Activated CD4-positive, alpha-beta memory T cell treated with anti-CD3 and anti-CD28 coated beads for 36 hours (primary cell): ENCODE measurements at regions of chr18 and their contacts with region 1.

Region 1: DNA sequence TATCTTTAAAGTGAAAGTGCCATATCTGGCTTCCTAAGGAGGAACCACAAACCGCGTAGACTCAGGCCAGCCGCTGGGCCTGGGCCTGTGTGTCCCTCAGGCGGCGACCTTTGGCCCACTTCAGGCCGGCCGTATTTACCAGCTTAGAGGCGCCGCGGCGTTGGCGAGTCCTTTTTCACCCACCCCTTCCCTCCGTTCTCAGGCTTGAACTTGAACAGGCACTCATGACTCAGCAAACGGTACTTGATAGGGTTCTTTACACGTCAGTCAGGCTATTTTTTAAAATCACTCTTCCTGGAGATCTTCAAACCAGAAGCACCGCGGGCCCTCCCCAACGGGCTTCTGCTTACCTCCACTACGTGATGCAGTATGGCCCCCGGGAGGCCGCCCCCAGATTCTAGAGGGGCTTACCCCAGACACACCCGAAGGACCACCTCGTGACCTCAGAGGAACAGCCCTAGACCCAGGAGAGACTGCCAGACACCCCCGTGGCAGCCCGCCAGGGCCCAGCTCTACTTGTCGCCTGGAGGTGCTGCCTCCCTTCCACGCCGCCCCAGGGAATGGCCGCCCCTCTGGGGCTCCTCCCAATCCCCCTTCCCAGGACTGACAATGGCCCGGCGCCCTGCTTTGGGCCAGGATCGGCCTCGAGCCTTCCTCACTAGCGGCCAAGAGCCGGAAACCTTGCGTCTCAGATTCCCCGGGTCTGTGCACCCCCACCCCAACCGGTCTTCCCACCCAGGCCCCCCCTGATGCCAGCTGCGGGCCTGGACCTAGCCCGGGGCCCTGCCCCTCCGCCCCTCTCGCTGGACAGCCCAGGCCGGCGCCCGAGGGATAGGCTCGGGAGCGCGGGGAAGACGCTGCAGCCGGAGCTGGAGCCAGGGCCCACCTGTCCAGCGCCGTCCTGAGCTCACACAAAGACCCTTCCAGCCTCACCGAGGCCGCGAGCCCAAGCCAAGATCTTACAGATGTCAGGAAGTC is 33.8 kb upstream of the IMPA2 start:
- DNase-seq: peak; percentile 76
- H3K4me3 Mint-ChIP-seq: peak overlapping the region; percentile 67
- H3K27ac Mint-ChIP-seq: peak overlapping the region; percentile 58
- H3K4me1 Mint-ChIP-seq: peaks cover 8% of the 10 kb centered on the region
- H3K27me3 Mint-ChIP-seq: peaks cover 4% of the 10 kb centered on the region

Region 2: DNA sequence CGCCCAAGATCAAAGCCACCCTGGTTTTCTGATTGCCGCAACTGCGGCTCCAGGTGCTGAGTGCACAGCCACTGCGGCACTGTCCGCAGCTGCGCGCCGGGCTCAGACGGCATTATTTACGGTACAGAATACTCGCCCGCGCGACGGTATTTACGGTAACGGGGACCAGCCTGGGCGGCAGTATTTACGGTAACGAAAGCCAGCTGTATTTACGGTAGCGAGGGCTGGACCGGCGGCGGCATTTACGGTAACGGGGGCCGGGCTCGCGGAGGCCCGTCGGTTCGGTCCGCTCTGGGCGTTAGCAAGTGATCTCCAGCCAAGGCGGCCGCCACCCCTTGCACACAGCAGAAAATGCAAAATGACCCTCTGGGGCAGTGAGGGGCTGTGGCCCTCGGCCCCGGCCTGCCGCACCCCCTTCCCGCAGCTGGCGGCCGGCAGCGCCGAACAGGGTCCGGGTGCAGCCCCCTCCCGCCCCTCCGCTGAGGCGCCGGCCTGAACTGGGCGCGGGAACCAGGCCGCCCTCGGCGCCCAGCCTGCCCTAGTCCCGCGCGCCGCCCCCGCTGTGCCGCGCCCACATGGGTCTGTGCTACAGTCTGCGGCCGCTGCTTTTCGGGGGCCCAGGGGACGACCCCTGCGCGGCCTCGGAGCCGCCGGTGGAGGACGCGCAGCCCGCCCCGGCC is 258.4 kb before region 1 on chr18 and contains the start of gene GNAL:
- CTCF ChIA-PET with region 1: no interaction called
- POLR2A ChIA-PET with region 1: no interaction called
- intact Hi-C with region 1: no loop called
- DNase-seq: peak; percentile 74
- H3K4me3 Mint-ChIP-seq: peak within 1 kb of the TSS; percentile 62
- H3K27ac Mint-ChIP-seq: no peak within 1 kb of the TSS
- H3K4me1 Mint-ChIP-seq: peaks cover 8% of the 10 kb centered on the region
- H3K27me3 Mint-ChIP-seq: peaks cover 30% of the 10 kb centered on the region
- total RNA-seq, gene GNAL: 0.12 TPM in 1 of 2 experiments, not detected in the other

Region 3: GRCh38 chr18:11857177-11857887 is 90.2 kb before region 1 on chr18:
- CTCF ChIA-PET with region 1: no interaction called
- POLR2A ChIA-PET with region 1: no interaction called
- intact Hi-C with region 1: no loop called
- DNase-seq: no peak
- H3K4me3 Mint-ChIP-seq: no peak overlapping the region
- H3K27ac Mint-ChIP-seq: no peak overlapping the region
- H3K4me1 Mint-ChIP-seq: peaks cover 20% of the 10 kb centered on the region
- H3K27me3 Mint-ChIP-seq: no peaks in the 10 kb centered on the region

Region 4: DNA sequence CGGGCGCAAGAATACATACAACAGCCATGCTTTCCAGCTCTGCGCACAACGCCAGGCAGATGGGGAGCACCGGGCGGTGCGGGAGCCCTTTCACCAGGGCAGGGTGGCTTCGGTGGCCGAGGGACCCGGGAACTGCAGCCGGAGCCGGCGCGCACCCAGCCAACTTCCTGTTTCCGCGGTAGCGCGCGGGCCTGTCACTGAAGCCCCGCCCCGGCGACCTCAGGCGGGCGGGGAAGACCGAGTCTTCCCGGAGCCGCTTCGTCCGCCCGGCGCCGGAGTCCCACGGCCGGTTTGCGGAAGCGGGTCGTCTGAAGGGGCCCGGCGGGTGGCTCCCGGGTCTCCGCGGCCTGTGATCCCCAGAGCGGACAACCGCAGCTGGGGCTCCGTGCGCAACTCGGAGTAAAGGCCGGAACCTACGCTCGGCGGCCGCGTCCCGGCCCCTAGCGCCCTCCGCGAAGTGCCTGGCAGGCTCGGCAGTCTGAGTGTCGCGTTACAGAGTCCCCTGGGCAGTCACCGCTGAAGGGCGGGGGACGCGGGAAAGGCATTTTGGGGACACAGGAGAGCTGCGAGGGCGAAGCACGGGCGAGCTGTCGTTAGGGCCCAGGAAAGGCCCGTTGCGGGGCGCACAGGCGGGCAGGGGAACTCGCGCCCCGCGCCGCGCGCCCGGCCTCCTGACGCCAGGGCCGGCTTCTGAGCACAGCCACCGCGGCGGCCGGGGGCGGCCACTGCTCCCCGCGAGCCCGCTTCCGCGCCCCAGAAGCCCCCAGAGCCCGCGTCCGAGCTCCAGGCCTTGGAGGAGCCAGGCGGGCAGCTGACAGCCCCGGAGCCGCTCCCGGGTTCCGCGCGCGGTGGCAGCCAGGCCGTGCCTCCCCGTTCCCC is 39.1 kb before region 1 on chr18 and contains the start of gene MPPE1:
- CTCF ChIA-PET with region 1: no interaction called
- POLR2A ChIA-PET with region 1: no interaction called
- intact Hi-C with region 1: loop called (anchors 2 kb)
- DNase-seq: peak; percentile 91
- H3K4me3 Mint-ChIP-seq: peak within 1 kb of the TSS; percentile 92
- H3K27ac Mint-ChIP-seq: peak within 1 kb of the TSS; percentile 90
- H3K4me1 Mint-ChIP-seq: peaks cover 22% of the 10 kb centered on the region
- H3K27me3 Mint-ChIP-seq: no peaks in the 10 kb centered on the region
- total RNA-seq, gene MPPE1: 34.0 to 35.4 TPM

Region 5: GRCh38 chr18:12066910-12067511 is 119.5 kb after region 1 on chr18:
- CTCF ChIA-PET with region 1: no interaction called
- POLR2A ChIA-PET with region 1: no interaction called
- intact Hi-C with region 1: no loop called
- DNase-seq: no peak
- H3K4me3 Mint-ChIP-seq: no peak overlapping the region
- H3K27ac Mint-ChIP-seq: no peak overlapping the region
- H3K4me1 Mint-ChIP-seq: no peaks in the 10 kb centered on the region
- H3K27me3 Mint-ChIP-seq: no peaks in the 10 kb centered on the region